Left ventricle myocardium superior (tissue), 1 donor: ENCODE measurements at regions of chr6 and their contacts with region 1.

Region 1: DNA sequence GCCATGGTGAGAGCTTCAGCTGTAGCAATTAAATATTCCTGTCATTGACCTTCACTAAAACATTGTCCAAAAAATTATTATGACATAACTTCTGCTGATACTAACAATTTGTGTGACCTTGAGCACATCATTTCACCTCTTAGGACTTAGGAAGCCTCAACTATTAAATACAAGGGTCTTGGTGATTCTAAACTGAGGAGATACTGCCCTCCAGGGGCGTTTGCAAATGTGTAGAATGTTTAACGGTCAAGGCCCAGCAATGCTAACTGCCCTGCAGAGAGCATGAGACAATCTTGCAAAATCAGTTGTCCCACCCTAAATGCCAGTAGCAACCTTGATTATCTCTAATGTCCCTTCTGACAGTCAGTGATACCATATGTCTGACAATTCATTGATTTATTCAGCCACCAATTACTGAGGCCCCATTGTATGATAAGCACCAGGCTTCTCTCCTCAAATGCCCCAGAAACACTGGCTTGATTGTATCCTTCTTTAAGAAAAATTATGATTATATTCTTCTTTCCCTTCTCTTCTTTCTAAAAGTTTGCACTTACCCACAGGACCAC is 284.1 kb upstream of the PLN start:
- DNase-seq: no peak
- ATAC-seq: peak; percentile 73

Region 2: DNA sequence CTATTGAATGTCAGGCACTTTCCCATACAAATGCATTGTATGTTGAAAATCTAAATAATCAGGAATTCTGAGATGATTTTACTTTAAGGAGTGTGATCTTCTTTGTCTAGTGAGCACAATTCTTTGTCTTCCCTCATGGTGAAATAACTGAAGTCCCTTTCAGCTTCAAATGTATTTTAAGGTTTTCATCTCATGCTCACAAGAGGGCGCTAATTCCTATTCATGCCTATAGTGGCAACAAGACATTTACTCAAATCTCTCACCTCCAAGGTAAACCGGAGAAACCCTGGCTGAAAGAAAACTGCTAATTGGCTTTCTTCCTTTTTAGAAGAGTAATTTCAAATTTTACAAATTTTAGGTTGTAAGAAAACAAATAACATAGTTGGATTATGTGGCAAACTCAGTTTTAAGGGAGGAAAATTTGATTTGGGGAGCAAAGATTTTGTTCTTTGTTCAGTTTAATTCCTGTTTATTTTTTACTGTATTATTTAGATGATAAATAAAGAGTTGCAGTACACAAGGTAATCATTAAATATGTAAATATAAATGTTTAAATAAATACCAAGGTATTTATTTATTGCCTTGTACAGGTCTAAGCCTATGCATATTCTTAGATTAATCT is 287.9 kb before region 1 on chr6:
- intact Hi-C with region 1: loop called (anchors 5 kb)
- DNase-seq: no peak
- ATAC-seq: peak; percentile 32